SK-N-SH (cell line): ENCODE measurements at regions of chr18 and their contacts with region 1.

Region 1: DNA sequence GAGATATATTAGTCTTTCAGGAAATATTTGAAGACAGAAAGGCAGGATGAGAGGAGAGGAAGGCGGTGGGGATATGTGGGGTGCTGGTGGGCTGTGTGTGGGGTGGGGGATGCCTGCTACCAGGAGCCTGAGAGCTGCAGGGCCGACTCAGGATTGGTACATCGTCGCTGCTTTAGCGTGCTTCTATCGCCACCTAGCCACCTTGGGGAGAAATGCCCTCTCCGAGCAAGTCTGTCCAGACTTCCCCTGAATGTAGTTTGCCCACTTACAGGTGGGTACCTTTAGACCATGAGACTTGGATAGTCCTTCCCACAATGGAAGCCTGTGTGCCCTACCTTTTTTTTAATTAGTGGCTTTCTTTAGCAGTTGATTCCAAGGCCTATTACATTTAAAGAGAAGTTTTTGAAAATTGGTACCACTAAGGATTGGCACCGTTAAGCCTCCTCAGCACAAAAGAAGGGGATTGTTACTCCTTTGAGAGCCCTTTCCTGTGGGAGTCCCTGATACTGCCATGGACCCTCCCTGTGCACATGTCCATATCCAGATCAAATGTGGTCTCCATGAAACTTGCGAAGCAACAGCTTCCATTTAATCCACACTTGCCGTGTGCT is 114.1 kb upstream of the NDUFV2 start:
- DNase-seq: peak; percentile 81
- H3K4me3 ChIP-seq: peak overlapping the region in 1 of 2 experiments; percentile 21; a peak in 1 of 4 replicates
- H3K27ac ChIP-seq: no peak overlapping the region
- H3K4me1 ChIP-seq: peaks cover 6 to 8% of the 10 kb centered on the region in 2 experiments; a peak in 2 of 4 replicates
- H3K27me3 ChIP-seq: no peaks in the 10 kb centered on the region
- CTCF ChIP-seq: peak; percentile 86
- EP300 ChIP-seq: no peak
- RAD21 ChIP-seq: peak; percentile 95

Region 2: DNA sequence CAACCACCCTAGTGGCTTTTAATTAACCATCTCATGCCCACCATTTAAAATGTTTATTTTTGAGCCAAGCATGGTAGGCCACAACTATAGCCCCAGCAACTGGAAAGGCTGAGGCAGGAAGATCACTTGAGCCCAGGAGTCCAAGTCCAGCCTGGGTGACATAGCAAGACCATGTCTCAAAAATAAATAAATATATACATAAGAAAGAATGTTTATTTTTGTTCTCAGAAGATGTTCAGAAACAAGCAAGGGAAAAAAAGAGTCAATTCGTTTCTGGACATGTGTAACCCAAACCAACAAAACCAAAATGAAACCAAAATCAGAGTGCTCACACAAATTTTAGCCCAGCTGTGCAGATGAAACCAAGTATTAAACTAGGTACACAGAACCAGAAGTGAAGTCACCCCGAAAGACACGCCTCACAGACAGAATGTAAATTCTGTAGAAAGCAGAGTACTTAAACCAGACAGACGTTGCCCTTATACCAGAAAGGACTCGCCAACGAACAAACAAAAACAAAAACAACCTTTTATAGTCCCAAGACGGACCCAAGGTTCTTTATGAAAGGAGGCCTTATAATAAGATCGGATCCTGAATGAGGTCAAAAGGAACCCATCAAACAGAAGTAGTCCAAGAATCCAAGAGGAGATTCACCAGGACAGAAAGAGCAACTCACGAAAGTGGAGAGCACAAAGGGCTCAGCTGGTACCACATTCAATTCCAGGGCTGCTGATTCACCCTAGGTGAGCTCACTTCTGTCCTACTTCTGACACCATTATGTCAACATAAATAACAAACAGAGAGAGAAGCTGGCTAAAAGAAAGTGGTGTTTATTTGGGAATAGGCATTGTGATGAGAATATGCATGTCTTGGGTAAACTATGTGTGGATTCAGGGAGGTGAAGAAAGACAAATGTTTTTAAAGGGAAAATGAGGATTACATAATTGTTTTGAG is 314.8 kb before region 1 on chr18:
- CTCF ChIA-PET with region 1: interaction called, 15 read pairs
- POLR2A ChIA-PET with region 1: no interaction called
- DNase-seq: no peak
- H3K4me3 ChIP-seq: no peak overlapping the region
- H3K27ac ChIP-seq: no peak overlapping the region
- H3K4me1 ChIP-seq: no peaks in the 10 kb centered on the region
- H3K27me3 ChIP-seq: no peaks in the 10 kb centered on the region
- CTCF ChIP-seq: no peak
- EP300 ChIP-seq: no peak
- RAD21 ChIP-seq: no peak

Region 3: DNA sequence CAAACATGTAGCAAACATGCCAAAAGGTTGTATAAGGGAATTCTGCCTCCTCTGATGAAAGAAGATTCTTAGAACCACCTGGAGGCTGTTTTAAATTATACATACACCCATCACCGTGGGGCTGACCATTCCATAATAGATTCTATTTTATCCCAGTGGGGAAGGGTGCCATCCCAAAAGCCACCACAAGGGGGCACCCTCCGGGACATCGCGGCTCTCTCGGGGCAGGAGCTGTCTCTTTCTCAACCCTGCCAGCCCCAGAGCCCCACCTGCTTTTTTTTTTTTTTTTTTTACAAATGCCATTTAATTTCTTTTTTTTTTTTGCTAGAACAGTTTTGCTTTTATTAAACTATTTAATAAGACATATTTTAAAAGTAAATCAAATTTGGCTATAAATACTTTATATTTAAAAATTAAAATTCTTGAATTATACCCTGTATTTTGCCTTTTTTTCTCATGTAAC is 291.6 kb before region 1 on chr18:
- CTCF ChIA-PET with region 1: interaction called, 56 read pairs
- POLR2A ChIA-PET with region 1: no interaction called
- DNase-seq: peak; percentile 85
- H3K4me3 ChIP-seq: no peak overlapping the region; a peak in 1 of 4 replicates
- H3K27ac ChIP-seq: no peak overlapping the region
- H3K4me1 ChIP-seq: peaks cover 4 to 9% of the 10 kb centered on the region in 2 experiments; a peak in 2 of 4 replicates
- H3K27me3 ChIP-seq: no peaks in the 10 kb centered on the region
- CTCF ChIP-seq: peak; percentile 94
- EP300 ChIP-seq: no peak
- RAD21 ChIP-seq: peak; percentile 81

Region 4: DNA sequence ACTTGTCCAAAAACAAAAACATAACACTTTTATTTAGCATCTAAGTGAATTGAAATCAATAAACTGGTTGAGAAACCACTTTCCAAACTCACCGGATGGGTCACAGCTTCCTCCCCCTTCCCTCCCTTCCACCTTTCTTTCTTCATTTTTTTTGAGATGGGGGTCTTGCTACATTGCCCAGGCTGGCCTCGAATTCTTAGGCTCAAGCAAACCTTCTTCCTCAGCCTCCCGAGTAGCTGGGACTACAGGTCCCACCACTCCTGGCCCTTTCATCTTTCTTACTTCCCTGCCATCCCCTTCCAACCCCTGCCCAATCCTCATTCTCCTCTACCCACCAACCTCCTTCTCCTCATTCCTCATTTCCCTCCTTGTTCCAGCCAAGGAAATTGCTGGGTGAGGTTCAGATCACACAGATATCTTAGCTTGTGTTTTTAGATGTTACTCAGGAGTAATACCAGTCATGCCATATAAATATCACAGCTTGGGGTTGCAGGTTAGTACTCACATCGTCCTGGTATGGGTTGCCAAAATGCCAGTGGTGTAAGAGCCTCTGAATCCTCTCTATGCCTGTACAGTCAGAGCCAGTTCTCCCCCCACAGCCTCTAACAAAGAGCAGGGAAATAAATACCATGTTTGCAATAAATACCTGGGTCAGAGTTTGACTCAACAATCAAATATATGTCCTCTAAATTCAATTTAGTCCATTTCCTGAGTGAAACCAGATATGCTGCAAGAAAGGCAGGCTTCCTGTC is 18.6 kb before region 1 on chr18:
- CTCF ChIA-PET with region 1: interaction called, 11 read pairs
- POLR2A ChIA-PET with region 1: no interaction called
- DNase-seq: no peak
- H3K4me3 ChIP-seq: no peak overlapping the region
- H3K27ac ChIP-seq: no peak overlapping the region; a peak in 1 of 4 replicates
- H3K4me1 ChIP-seq: no peaks in the 10 kb centered on the region; a peak in 1 of 4 replicates
- H3K27me3 ChIP-seq: no peaks in the 10 kb centered on the region
- CTCF ChIP-seq: no peak
- EP300 ChIP-seq: no peak
- RAD21 ChIP-seq: no peak

Region 5: GRCh38 chr18:9147440-9148202 is 159.3 kb after region 1 on chr18:
- CTCF ChIA-PET with region 1: interaction called, 12 read pairs
- POLR2A ChIA-PET with region 1: no interaction called
- DNase-seq: peak; percentile 50
- H3K4me3 ChIP-seq: no peak overlapping the region
- H3K27ac ChIP-seq: peak overlapping the region in 1 of 2 experiments; percentile 32
- H3K4me1 ChIP-seq: peaks cover 0 to 14% of the 10 kb centered on the region in 2 experiments; a peak in 2 of 4 replicates
- H3K27me3 ChIP-seq: no peaks in the 10 kb centered on the region
- CTCF ChIP-seq: peak; percentile 84
- EP300 ChIP-seq: no peak
- RAD21 ChIP-seq: peak; percentile 88

Region 6: GRCh38 chr18:9206421-9206820 is 218.1 kb after region 1 on chr18:
- CTCF ChIA-PET with region 1: no interaction called
- POLR2A ChIA-PET with region 1: no interaction called
- DNase-seq: no peak
- H3K4me3 ChIP-seq: no peak overlapping the region
- H3K27ac ChIP-seq: no peak overlapping the region
- H3K4me1 ChIP-seq: no peaks in the 10 kb centered on the region; a peak in 2 of 4 replicates
- H3K27me3 ChIP-seq: no peaks in the 10 kb centered on the region
- CTCF ChIP-seq: no peak
- EP300 ChIP-seq: no peak
- RAD21 ChIP-seq: no peak

Region 7: GRCh38 chr18:9217743-9218451 is 229.5 kb after region 1 on chr18:
- CTCF ChIA-PET with region 1: no interaction called
- POLR2A ChIA-PET with region 1: no interaction called
- DNase-seq: no peak
- H3K4me3 ChIP-seq: no peak overlapping the region
- H3K27ac ChIP-seq: no peak overlapping the region
- H3K4me1 ChIP-seq: no peaks in the 10 kb centered on the region; a peak in 1 of 4 replicates
- H3K27me3 ChIP-seq: no peaks in the 10 kb centered on the region
- CTCF ChIP-seq: no peak
- EP300 ChIP-seq: no peak
- RAD21 ChIP-seq: no peak